Naive thymus-derived CD4-positive, alpha-beta T cell (primary cell): ENCODE measurements at regions of chr5 and their contacts with region 1.

Region 1: GRCh38 chr5:36264202-36264760 is 22.6 kb upstream of the NADK2 start:
- DNase-seq: no peak
- ATAC-seq: no peak
- H3K4me3 ChIP-seq: no peak overlapping the region
- H3K4me3 Mint-ChIP-seq: no peak overlapping the region
- H3K27ac ChIP-seq: no peak overlapping the region
- H3K27ac Mint-ChIP-seq: no peak overlapping the region
- H3K4me1 ChIP-seq: no peaks in the 10 kb centered on the region
- H3K4me1 Mint-ChIP-seq: no peaks in the 10 kb centered on the region
- H3K27me3 ChIP-seq: no peaks in the 10 kb centered on the region
- H3K27me3 Mint-ChIP-seq: peaks cover 21 to 41% (median 30%) of the 10 kb centered on the region in 5 donors

Region 2: GRCh38 chr5:36029914-36030313 is 234.4 kb before region 1 on chr5:
- CTCF ChIA-PET with region 1: no interaction called
- POLR2A ChIA-PET with region 1: no interaction called
- intact Hi-C with region 1: no loop called
- DNase-seq: no peak
- ATAC-seq: no peak
- H3K4me3 ChIP-seq: no peak overlapping the region
- H3K4me3 Mint-ChIP-seq: no peak overlapping the region
- H3K27ac ChIP-seq: no peak overlapping the region
- H3K27ac Mint-ChIP-seq: no peak overlapping the region
- H3K4me1 ChIP-seq: no peaks in the 10 kb centered on the region
- H3K4me1 Mint-ChIP-seq: no peaks in the 10 kb centered on the region
- H3K27me3 ChIP-seq: no peaks in the 10 kb centered on the region
- H3K27me3 Mint-ChIP-seq: peaks cover 0 to 18% (median 7%) of the 10 kb centered on the region in 5 donors

Region 3: GRCh38 chr5:36108758-36109460 is 155.4 kb before region 1 on chr5:
- CTCF ChIA-PET with region 1: no interaction called
- POLR2A ChIA-PET with region 1: no interaction called
- intact Hi-C with region 1: no loop called
- DNase-seq: no peak
- ATAC-seq: no peak
- H3K4me3 ChIP-seq: no peak overlapping the region
- H3K4me3 Mint-ChIP-seq: no peak overlapping the region
- H3K27ac ChIP-seq: no peak overlapping the region
- H3K27ac Mint-ChIP-seq: no peak overlapping the region
- H3K4me1 ChIP-seq: no peaks in the 10 kb centered on the region
- H3K4me1 Mint-ChIP-seq: peaks cover 0 to 1% (median 0%) of the 10 kb centered on the region in 7 donors
- H3K27me3 ChIP-seq: no peaks in the 10 kb centered on the region
- H3K27me3 Mint-ChIP-seq: no peaks in the 10 kb centered on the region

Region 4: GRCh38 chr5:36214434-36214833 is 49.8 kb before region 1 on chr5:
- CTCF ChIA-PET with region 1: no interaction called
- POLR2A ChIA-PET with region 1: no interaction called
- intact Hi-C with region 1: no loop called
- DNase-seq: peak in 1 of 9 donors; percentile 4
- ATAC-seq: no peak
- H3K4me3 ChIP-seq: no peak overlapping the region
- H3K4me3 Mint-ChIP-seq: no peak overlapping the region
- H3K27ac ChIP-seq: no peak overlapping the region
- H3K27ac Mint-ChIP-seq: no peak overlapping the region
- H3K4me1 ChIP-seq: no peaks in the 10 kb centered on the region
- H3K4me1 Mint-ChIP-seq: peaks cover 0 to under 1% (median 0%) of the 10 kb centered on the region in 7 donors
- H3K27me3 ChIP-seq: no peaks in the 10 kb centered on the region
- H3K27me3 Mint-ChIP-seq: no peaks in the 10 kb centered on the region

Region 5: DNA sequence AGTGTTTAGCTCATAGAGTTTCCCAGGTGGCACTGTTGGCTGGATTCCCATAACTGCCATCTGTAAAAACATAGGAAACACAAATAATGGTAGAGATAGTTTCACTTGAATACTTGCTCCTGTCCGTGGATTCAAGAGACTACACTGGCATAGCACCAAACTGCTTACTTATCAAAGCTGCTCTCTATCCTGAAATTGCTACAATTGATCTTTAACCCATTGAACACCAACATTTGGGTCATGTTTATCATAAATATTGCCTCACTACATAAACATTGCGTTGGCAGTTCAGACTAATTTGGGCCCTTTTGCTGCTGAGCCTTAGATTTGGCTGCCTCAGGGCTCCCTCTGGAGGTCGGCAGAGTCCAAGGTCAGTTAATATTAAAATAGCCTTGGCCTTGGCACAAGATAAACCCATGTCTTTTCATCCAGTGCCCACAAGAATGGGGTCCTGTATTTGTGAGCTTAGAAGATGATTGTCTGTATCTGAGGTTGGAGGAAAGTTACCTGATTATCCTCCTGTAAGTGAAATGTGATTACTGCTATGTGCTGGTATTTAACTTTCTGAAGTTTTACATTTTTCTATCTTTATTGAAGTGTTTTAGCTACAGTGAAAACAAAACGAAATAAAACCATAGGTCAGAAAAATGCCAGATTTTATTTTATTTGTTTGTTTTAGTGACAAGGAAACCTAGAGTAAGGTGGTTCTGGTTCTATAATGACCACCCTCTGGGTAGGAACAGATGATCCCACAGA is 41.5 kb after region 1 on chr5:
- CTCF ChIA-PET with region 1: no interaction called
- POLR2A ChIA-PET with region 1: no interaction called
- intact Hi-C with region 1: loop called (anchors 1 kb)
- DNase-seq: peak in 3 of 9 donors; percentile 3 to 10 (median 4)
- ATAC-seq: peak; percentile 46
- H3K4me3 ChIP-seq: no peak overlapping the region
- H3K4me3 Mint-ChIP-seq: no peak overlapping the region
- H3K27ac ChIP-seq: no peak overlapping the region
- H3K27ac Mint-ChIP-seq: no peak overlapping the region
- H3K4me1 ChIP-seq: no peaks in the 10 kb centered on the region
- H3K4me1 Mint-ChIP-seq: peaks cover 0 to 12% (median 6%) of the 10 kb centered on the region in 7 donors
- H3K27me3 ChIP-seq: no peaks in the 10 kb centered on the region
- H3K27me3 Mint-ChIP-seq: peaks cover 11 to 25% (median 15%) of the 10 kb centered on the region in 5 donors

Region 6: GRCh38 chr5:36507332-36507952 is 243.2 kb after region 1 on chr5:
- CTCF ChIA-PET with region 1: interaction called, 4 read pairs
- POLR2A ChIA-PET with region 1: no interaction called
- intact Hi-C with region 1: loop called in 1 of 2 experiments (anchors 1 kb)
- DNase-seq: peak; percentile 28 to 69 (median 50)
- ATAC-seq: peak; percentile 70
- H3K4me3 ChIP-seq: no peak overlapping the region
- H3K4me3 Mint-ChIP-seq: no peak overlapping the region
- H3K27ac ChIP-seq: no peak overlapping the region
- H3K27ac Mint-ChIP-seq: no peak overlapping the region
- H3K4me1 ChIP-seq: no peaks in the 10 kb centered on the region
- H3K4me1 Mint-ChIP-seq: peaks cover 0 to 3% (median 0%) of the 10 kb centered on the region in 7 donors
- H3K27me3 ChIP-seq: no peaks in the 10 kb centered on the region
- H3K27me3 Mint-ChIP-seq: peaks cover 10 to 34% (median 20%) of the 10 kb centered on the region in 5 donors

Region 7: GRCh38 chr5:36690041-36690961 is 426.0 kb after region 1 on chr5:
- CTCF ChIA-PET with region 1: no interaction called
- POLR2A ChIA-PET with region 1: no interaction called
- intact Hi-C with region 1: loop called in 1 of 2 experiments (anchors 1 kb)
- DNase-seq: peak; percentile 24 to 64 (median 43)
- ATAC-seq: peak; percentile 81
- H3K4me3 ChIP-seq: peak overlapping the region; percentile 73
- H3K4me3 Mint-ChIP-seq: peak overlapping the region; percentile 72 to 91 (median 86)
- H3K27ac ChIP-seq: no peak overlapping the region
- H3K27ac Mint-ChIP-seq: peak overlapping the region in 3 of 9 donors; percentile 19 to 45 (median 21)
- H3K4me1 ChIP-seq: peaks cover 5 to 8% of the 10 kb centered on the region in 2 donors
- H3K4me1 Mint-ChIP-seq: peaks cover 7 to 14% (median 12%) of the 10 kb centered on the region in 7 donors
- H3K27me3 ChIP-seq: no peaks in the 10 kb centered on the region
- H3K27me3 Mint-ChIP-seq: peaks cover 19 to 36% (median 33%) of the 10 kb centered on the region in 5 donors

Region 8: GRCh38 chr5:36695677-36696673 is 431.7 kb after region 1 on chr5:
- CTCF ChIA-PET with region 1: interaction called, 3 read pairs
- POLR2A ChIA-PET with region 1: no interaction called
- intact Hi-C with region 1: loop called (anchors 1 kb)
- DNase-seq: peak in 6 of 9 donors; percentile 4 to 42 (median 20)
- ATAC-seq: peak; percentile 67
- H3K4me3 ChIP-seq: no peak overlapping the region
- H3K4me3 Mint-ChIP-seq: no peak overlapping the region
- H3K27ac ChIP-seq: no peak overlapping the region
- H3K27ac Mint-ChIP-seq: no peak overlapping the region
- H3K4me1 ChIP-seq: no peaks in the 10 kb centered on the region
- H3K4me1 Mint-ChIP-seq: peaks cover 0 to 3% (median 0%) of the 10 kb centered on the region in 7 donors
- H3K27me3 ChIP-seq: no peaks in the 10 kb centered on the region
- H3K27me3 Mint-ChIP-seq: peaks cover 8 to 28% (median 18%) of the 10 kb centered on the region in 5 donors

Region 9: DNA sequence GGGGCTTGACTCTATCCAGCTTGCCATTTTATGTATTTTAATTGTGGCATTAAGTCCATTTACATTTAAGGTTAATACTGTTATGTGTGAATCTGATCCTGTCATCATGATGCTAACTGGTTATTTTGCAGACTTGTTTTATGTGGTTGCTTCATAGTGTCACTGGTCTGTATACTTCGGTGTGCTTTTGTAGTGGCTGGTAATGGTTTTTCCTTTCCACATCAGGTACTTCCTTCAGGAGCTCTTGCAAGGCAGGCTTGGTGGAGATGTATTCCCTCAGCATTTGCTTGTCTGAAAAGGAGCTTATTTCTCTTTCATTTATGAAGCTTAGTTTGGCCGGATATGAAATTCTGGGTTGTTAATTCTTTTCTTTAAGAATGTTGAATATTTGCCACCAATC is 839.0 kb after region 1 on chr5:
- CTCF ChIA-PET with region 1: no interaction called
- POLR2A ChIA-PET with region 1: no interaction called
- intact Hi-C with region 1: no loop called
- DNase-seq: no peak
- ATAC-seq: no peak
- H3K4me3 ChIP-seq: no peak overlapping the region
- H3K4me3 Mint-ChIP-seq: peak overlapping the region in 1 of 10 donors; percentile 16
- H3K27ac ChIP-seq: no peak overlapping the region
- H3K27ac Mint-ChIP-seq: peak overlapping the region in 1 of 9 donors; percentile 1
- H3K4me1 ChIP-seq: no peaks in the 10 kb centered on the region
- H3K4me1 Mint-ChIP-seq: peaks cover 0 to 21% (median 16%) of the 10 kb centered on the region in 7 donors
- H3K27me3 ChIP-seq: no peaks in the 10 kb centered on the region
- H3K27me3 Mint-ChIP-seq: no peaks in the 10 kb centered on the region